ENCODE measurements at regions of chr9 and their contacts with region 1.

Region 1: GRCh38 chr9:133144137-133144903 is 19.4 kb downstream of the GBGT1 start:
- DNase-seq: peak; percentile 86
- ATAC-seq: peak; percentile 13

Region 2: DNA sequence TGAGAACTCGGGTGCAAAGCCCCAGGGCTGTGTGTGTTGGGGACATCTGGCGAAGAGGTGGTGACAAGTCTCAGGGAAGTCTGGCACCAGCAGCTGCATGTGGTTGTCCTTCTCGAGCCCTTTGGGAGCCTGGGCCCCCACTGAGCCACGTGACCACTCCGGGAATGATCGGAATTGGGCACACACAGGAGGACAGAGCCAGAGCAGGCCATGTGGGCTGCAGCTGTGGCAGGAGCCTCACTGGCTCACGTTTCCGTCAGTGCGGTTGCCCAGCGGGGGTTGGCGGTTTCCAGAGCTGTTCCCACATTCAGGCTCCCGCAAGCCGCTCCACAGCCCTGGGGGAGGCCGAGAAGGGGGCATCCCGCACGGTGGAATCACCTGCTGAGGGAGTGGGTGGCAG is 89.4 kb before region 1 on chr9:
- intact Hi-C with region 1: loop called (anchors 2 kb)
- DNase-seq: peak; percentile 86
- ATAC-seq: peak; percentile 90

Region 3: DNA sequence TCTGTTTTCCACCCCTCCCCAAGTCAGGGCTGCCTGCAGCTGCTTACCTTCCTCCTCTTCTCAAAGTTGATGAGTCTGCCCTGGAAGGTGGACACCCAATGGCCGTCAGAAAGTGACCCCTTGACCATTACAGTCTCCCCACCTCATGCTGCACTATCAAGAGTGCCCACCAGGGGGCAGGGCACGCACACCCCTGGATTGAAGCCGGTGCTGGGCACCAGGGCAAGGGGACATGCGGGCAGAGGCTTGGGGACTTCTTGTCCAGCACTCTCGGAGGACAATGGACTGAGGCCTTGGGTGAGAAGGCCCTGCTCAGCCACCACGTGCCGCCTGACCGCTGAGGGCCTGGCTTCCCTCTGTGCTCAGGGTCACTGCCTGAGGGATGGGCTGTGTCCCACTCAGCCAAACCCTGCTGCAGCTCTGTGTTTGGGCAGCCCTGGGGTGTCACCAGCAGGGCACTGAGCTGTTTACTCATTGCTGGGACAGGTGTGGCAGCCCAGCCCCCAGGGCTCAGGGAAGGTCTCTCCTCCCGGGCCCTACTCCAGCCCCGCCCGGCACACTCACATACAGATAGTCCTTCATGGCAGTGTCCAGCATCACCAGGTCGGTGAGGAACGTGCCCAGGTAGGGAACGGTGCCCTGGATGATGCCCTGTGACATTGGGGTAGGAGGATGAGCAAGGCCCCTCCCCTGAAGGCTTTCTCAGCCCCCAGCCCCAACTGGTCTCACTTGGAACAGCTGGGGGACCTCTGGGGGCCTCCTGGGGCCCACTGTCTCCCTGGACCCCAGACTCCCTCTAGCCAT is 40.9 kb before region 1 on chr9:
- intact Hi-C with region 1: loop called (anchors 1 kb)
- DNase-seq: peak; percentile 87
- ATAC-seq: peak; percentile 58

Region 4: DNA sequence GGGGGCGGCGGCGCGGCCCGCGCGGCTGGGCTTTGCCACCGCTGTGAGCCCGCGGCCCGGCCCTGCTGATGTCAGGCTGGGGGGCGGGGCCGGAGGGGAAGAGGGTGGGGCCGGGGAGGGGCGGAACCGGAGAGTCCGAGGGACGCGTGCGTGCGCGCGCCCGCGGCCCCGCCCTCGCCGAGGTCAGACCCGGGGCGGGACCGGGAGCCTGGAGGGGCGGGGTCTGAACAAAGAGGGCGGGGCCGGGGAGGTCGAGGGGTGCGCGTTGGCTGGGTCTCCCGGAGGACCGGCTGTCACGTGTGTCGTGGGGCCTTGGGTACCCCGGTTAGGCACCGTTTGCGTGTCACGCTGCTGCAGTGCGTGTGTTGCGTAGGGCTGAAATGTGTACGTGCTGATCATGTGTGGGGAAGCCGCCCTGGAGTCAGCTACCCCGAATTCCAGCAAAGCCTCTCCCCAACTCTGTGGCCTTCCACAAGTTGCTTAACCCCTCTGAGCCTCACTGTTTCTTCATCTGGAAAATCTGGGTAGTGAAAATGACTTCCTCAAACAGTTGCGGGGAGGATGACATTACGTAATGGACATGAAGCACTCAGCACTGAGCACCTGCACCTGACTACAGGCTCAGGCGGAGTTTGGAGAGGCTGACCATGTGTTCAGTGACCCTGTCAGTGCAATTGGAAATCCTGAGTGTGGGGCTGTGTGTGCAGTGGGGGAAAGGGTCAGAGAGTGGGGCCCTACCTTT is 23.0 kb before region 1 on chr9 and contains the start of gene RALGDS:
- intact Hi-C with region 1: loop called (anchors 2 kb)
- DNase-seq: peak; percentile 95
- ATAC-seq: peak; percentile 86
- total RNA-seq, gene RALGDS: 33.7 TPM